ENCODE measurements at regions of chr10 and their contacts with region 1.

Region 1: GRCh38 chr10:60032723-60033122 is 126.4 kb upstream of the CCDC6 start:
- DNase-seq: peak; percentile 68 to 82
- H3K4me3 ChIP-seq: no peak overlapping the region
- H3K4me3 Mint-ChIP-seq: no peak overlapping the region
- H3K27ac Mint-ChIP-seq: no peak overlapping the region
- H3K4me1 ChIP-seq: peaks cover 11% of the 10 kb centered on the region; the same call in 1 of the 2 replicates
- H3K4me1 Mint-ChIP-seq: peaks cover 9% of the 10 kb centered on the region
- H3K27me3 ChIP-seq: no peaks in the 10 kb centered on the region
- H3K27me3 Mint-ChIP-seq: no peaks in the 10 kb centered on the region
- CTCF ChIP-seq: peak; percentile 79 to 86

Region 2: GRCh38 chr10:59808896-59809643 is 223.7 kb before region 1 on chr10:
- CTCF ChIA-PET with region 1: no interaction called
- POLR2A ChIA-PET with region 1: no interaction called
- intact Hi-C with region 1: loop called (anchors 1 kb)
- DNase-seq: peak; percentile 84 to 90
- H3K4me3 ChIP-seq: no peak overlapping the region
- H3K4me3 Mint-ChIP-seq: no peak overlapping the region
- H3K27ac Mint-ChIP-seq: no peak overlapping the region
- H3K4me1 ChIP-seq: no peaks in the 10 kb centered on the region
- H3K4me1 Mint-ChIP-seq: no peaks in the 10 kb centered on the region
- H3K27me3 ChIP-seq: no peaks in the 10 kb centered on the region
- H3K27me3 Mint-ChIP-seq: no peaks in the 10 kb centered on the region
- CTCF ChIP-seq: peak; percentile 87 to 92

Region 3: GRCh38 chr10:59830601-59831259 is 202.0 kb before region 1 on chr10:
- CTCF ChIA-PET with region 1: interaction called, 6 read pairs
- POLR2A ChIA-PET with region 1: no interaction called
- intact Hi-C with region 1: loop called (anchors 1 kb)
- DNase-seq: peak; percentile 68 to 79
- H3K4me3 ChIP-seq: no peak overlapping the region
- H3K4me3 Mint-ChIP-seq: no peak overlapping the region
- H3K27ac Mint-ChIP-seq: no peak overlapping the region
- H3K4me1 ChIP-seq: no peaks in the 10 kb centered on the region; the same call in 1 of the 2 replicates
- H3K4me1 Mint-ChIP-seq: peaks cover 7% of the 10 kb centered on the region
- H3K27me3 ChIP-seq: no peaks in the 10 kb centered on the region
- H3K27me3 Mint-ChIP-seq: no peaks in the 10 kb centered on the region
- CTCF ChIP-seq: peak; percentile 91 to 98

Region 4: DNA sequence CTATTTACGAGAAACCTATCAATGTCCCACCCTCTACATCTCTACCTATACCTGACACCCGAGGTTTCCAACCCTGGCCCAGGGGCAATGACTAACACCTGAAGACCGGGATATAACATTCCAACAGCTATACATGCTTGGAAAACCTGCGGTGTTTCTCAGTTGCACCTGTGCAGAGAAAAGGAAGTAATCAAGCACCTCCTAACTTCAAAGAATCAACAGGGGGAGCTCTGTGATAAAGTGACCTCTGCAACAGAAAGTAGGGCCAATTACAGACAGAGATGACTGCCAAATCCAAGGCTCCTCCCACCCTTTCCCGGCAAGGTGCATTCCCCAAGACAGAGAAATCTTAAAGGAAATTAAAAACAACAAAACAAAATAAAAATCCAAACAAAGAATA is 167.6 kb before region 1 on chr10:
- CTCF ChIA-PET with region 1: interaction called, 3 read pairs
- POLR2A ChIA-PET with region 1: no interaction called
- intact Hi-C with region 1: loop called (anchors 1 kb)
- DNase-seq: peak; percentile 60 to 75
- H3K4me3 ChIP-seq: no peak overlapping the region
- H3K4me3 Mint-ChIP-seq: no peak overlapping the region
- H3K27ac Mint-ChIP-seq: peak overlapping the region; percentile 39
- H3K4me1 ChIP-seq: no peaks in the 10 kb centered on the region
- H3K4me1 Mint-ChIP-seq: peaks cover 27% of the 10 kb centered on the region
- H3K27me3 ChIP-seq: no peaks in the 10 kb centered on the region
- H3K27me3 Mint-ChIP-seq: no peaks in the 10 kb centered on the region
- CTCF ChIP-seq: peak; percentile 73 to 86

Region 5: GRCh38 chr10:59971915-59972314 is 60.8 kb before region 1 on chr10:
- CTCF ChIA-PET with region 1: no interaction called
- POLR2A ChIA-PET with region 1: no interaction called
- intact Hi-C with region 1: loop called (anchors 2 kb)
- DNase-seq: peak; percentile 93 to 95
- H3K4me3 ChIP-seq: no peak overlapping the region
- H3K4me3 Mint-ChIP-seq: no peak overlapping the region
- H3K27ac Mint-ChIP-seq: no peak overlapping the region
- H3K4me1 ChIP-seq: peaks cover 40% of the 10 kb centered on the region
- H3K4me1 Mint-ChIP-seq: peaks cover 26% of the 10 kb centered on the region
- H3K27me3 ChIP-seq: no peaks in the 10 kb centered on the region
- H3K27me3 Mint-ChIP-seq: no peaks in the 10 kb centered on the region
- CTCF ChIP-seq: no peak

Region 6: DNA sequence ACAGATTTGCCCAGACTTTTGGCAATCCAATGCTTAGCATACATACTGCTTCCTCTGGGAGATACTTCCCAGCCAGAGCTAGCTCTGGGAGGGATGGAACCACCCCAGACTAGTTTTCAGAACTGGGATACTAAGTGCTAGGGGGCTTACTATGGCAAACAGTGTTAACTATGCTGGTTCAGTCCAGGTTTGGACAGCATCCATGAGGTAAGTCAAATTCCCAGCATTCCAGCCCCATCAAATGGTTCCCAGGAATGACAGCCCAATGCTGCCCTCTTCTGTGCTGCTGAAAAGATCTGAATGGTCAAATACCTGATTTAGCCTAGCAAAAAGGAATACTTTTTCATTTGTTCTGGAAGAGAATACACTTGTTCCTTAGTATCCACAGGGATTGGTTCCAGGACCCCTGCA is 15.4 kb after region 1 on chr10:
- CTCF ChIA-PET with region 1: no interaction called
- POLR2A ChIA-PET with region 1: no interaction called
- intact Hi-C with region 1: loop called (anchors 1 kb)
- DNase-seq: peak; percentile 81 to 83
- H3K4me3 ChIP-seq: no peak overlapping the region
- H3K4me3 Mint-ChIP-seq: no peak overlapping the region
- H3K27ac Mint-ChIP-seq: no peak overlapping the region
- H3K4me1 ChIP-seq: peaks cover 5% of the 10 kb centered on the region
- H3K4me1 Mint-ChIP-seq: no peaks in the 10 kb centered on the region
- H3K27me3 ChIP-seq: no peaks in the 10 kb centered on the region
- H3K27me3 Mint-ChIP-seq: no peaks in the 10 kb centered on the region
- CTCF ChIP-seq: peak; percentile 84 to 86